Endothelial cell of umbilical vein (primary cell): ENCODE measurements at regions of chr1 and their contacts with region 1.

Region 1: DNA sequence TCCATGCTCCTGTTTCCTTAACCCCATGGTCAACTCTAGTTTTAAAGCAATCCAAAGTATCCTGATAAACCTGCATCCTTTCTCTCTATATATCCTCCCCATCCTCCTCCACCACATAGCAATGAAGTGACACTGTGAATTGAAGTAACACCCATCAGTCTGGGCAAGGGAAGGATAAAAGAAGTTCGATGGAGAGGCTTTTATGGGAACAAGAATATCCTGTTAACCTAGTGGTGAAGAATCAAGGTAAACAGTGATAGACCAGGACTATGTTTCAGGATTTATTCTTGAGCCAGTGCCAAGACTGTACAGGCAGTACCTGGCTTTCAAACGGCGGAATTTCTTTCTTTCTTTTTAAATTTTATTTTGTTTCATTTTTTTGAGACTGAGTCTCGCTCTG is 17.6 kb downstream of the RABIF start:
- DNase-seq: no peak
- H3K4me3 ChIP-seq: no peak overlapping the region
- H3K27ac ChIP-seq: no peak overlapping the region
- H3K4me1 ChIP-seq: no peaks in the 10 kb centered on the region
- H3K27me3 ChIP-seq: no peaks in the 10 kb centered on the region
- CTCF ChIP-seq: no peak
- POLR2A ChIP-seq: no peak

Region 2: DNA sequence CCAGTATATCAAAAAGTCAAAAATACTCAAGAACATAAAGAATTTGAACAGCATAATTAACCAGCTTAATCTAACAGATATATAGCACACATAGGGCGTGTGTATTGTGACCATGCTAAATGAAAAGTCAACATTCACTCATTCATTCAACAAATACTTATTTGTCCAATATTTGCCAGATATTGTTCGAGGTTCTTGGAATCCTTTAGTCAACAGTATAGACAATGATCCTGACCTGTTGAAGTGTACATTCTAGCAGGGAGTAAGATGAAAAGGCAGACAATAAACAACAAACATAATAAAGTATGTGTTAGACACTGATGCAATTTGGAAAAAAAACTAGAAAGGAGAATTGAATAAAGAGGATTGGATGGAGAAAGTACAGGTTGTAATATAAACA is 348.4 kb before region 1 on chr1:
- CTCF ChIA-PET with region 1: no interaction called
- POLR2A ChIA-PET with region 1: no interaction called
- dilution Hi-C with region 1: no loop called
- intact Hi-C with region 1: no loop called
- DNase-seq: no peak
- H3K4me3 ChIP-seq: no peak overlapping the region
- H3K27ac ChIP-seq: no peak overlapping the region
- H3K4me1 ChIP-seq: no peaks in the 10 kb centered on the region
- H3K27me3 ChIP-seq: no peaks in the 10 kb centered on the region
- CTCF ChIP-seq: no peak
- POLR2A ChIP-seq: no peak

Region 3: DNA sequence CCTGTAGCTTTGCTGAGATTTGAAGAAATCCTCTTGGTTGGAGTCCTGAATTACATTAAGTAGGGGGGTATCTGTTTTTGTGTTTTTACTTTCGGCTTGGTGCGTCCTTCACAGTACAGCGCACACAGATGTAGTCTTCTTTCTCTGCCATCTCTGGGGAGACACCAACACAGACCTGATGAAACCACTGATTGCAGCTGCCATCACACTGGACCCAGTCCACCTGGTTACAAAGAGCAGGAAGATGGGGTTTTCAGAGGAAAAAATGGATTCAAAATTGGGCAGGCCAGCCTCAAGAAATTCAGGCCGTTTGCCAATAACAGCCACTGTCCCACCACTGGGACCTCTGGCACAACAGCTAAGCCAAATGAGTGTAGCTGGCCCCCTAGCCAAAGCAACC is 142.4 kb before region 1 on chr1:
- CTCF ChIA-PET with region 1: no interaction called
- POLR2A ChIA-PET with region 1: no interaction called
- dilution Hi-C with region 1: no loop called
- intact Hi-C with region 1: no loop called
- DNase-seq: no peak
- H3K4me3 ChIP-seq: no peak overlapping the region
- H3K27ac ChIP-seq: no peak overlapping the region
- H3K4me1 ChIP-seq: no peaks in the 10 kb centered on the region
- H3K27me3 ChIP-seq: no peaks in the 10 kb centered on the region
- CTCF ChIP-seq: no peak
- POLR2A ChIP-seq: no peak

Region 4: GRCh38 chr1:202750758-202751157 is 120.6 kb before region 1 on chr1:
- CTCF ChIA-PET with region 1: no interaction called
- POLR2A ChIA-PET with region 1: no interaction called
- dilution Hi-C with region 1: no loop called
- intact Hi-C with region 1: no loop called
- DNase-seq: no peak
- H3K4me3 ChIP-seq: no peak overlapping the region
- H3K27ac ChIP-seq: no peak overlapping the region
- H3K4me1 ChIP-seq: no peaks in the 10 kb centered on the region
- H3K27me3 ChIP-seq: no peaks in the 10 kb centered on the region
- CTCF ChIP-seq: no peak
- POLR2A ChIP-seq: no peak

Region 5: DNA sequence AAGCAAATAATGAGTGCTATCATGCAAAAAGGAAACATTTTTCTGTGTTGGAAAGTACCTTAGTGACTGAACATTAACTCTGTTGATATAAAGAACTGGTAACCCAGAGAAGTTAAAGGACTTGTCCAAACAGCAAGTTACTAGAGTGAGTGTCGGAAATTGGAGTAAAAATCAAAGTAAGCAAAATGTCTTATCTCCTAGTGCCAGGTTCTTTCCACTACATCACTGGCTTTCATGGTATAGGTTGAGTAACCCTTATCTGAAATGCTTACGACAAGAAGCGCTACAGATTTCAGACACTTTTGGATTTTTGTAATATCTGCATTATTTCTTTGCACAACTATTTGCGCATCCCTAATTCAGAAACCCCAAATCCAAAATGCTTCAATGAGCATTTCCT is 34.0 kb after region 1 on chr1:
- CTCF ChIA-PET with region 1: no interaction called
- POLR2A ChIA-PET with region 1: no interaction called
- dilution Hi-C with region 1: no loop called
- intact Hi-C with region 1: loop called (anchors 1 kb)
- DNase-seq: no peak
- H3K4me3 ChIP-seq: no peak overlapping the region
- H3K27ac ChIP-seq: no peak overlapping the region
- H3K4me1 ChIP-seq: no peaks in the 10 kb centered on the region
- H3K27me3 ChIP-seq: no peaks in the 10 kb centered on the region
- CTCF ChIP-seq: no peak
- POLR2A ChIP-seq: no peak

Region 6: DNA sequence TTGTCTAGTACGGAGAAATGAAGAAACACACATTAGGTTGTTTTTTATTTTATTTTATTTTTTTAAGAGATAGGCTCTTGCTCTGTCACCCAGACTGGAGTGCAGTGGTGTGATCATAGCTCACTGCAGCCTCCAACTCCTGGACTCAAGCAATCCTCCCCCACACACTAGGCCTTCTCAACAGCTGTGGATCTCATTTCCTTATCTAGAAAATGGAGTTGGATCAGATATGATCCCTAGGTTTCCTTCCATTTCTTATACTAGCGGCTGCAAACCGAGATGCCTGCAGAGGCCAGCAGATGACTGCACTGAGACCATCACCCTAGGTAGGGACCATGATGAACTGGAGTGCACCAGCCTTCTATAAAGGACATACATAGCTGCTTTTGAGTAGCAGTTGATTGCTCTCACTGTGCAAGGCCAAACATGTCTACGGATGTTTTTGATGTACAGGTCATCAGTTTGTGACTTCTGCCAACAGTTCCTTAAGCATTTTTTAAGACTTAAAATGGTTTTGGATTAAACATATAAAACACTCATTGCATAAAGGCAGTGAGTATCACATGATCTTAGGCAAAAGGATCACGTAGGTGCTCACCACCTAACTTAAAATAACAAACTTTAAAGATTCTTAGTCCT is 67.0 kb after region 1 on chr1:
- CTCF ChIA-PET with region 1: no interaction called
- POLR2A ChIA-PET with region 1: no interaction called
- dilution Hi-C with region 1: no loop called
- intact Hi-C with region 1: no loop called
- DNase-seq: no peak
- H3K4me3 ChIP-seq: no peak overlapping the region
- H3K27ac ChIP-seq: no peak overlapping the region
- H3K4me1 ChIP-seq: no peaks in the 10 kb centered on the region
- H3K27me3 ChIP-seq: no peaks in the 10 kb centered on the region
- CTCF ChIP-seq: no peak
- POLR2A ChIP-seq: no peak